ENCODE measurements at regions of chr14 and their contacts with region 1.

Region 1: DNA sequence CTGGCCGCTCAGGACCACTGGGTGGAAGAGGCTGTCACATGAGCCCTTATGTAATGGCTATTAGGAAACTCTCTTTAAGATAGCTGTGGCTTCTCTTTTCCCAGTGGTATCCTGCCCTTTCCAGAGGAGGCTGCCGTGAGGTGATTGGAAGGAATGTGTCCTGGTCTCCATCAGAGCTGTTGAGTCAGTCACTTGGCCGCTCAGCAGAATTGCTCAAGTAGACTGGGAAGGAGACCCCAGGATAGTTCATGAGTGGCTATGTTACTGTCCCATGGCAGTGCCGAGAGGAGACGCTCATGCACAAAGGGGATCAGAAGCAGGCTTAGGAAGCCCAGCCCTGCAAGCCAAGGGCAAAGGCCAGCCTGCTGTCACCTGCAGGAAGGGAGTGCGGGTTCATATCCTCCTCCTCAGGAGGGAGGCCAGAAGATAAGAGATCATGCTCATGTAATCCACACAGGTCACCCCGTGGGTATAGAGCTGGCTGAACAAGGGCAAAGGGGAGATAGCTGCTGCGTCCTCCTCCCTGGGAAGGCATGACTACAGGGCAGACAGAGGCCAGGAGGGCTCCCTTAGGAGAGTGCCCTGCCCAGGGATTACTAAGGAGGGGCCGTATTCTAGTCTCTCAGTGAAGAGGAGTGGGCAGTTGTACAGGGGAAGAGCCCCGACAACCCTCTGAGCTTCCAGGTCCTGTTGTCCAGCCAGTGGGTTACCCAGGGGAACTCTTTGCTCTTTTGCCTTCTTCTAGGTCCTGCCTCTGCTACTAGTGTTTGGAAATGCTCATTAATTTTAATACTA is 137.0 kb upstream of the MAX start:
- DNase-seq: peak; percentile 61
- ATAC-seq: peak; percentile 50
- H3K4me3 ChIP-seq: peak overlapping the region; percentile 6 to 65 (median 40); a peak in 5 of 6 replicates
- H3K27ac ChIP-seq: peak overlapping the region; percentile 66
- H3K4me1 ChIP-seq: peaks cover 75% of the 10 kb centered on the region
- H3K27me3 ChIP-seq: no peaks in the 10 kb centered on the region
- CTCF ChIP-seq: peak; percentile 26; the same call in 1 of the 2 replicates
- EP300 ChIP-seq: no peak
- POLR2A ChIP-seq: no peak; a peak in 1 of 4 replicates
- RAD21 ChIP-seq: no peak

Region 2: GRCh38 chr14:65131301-65131701 is 108.0 kb before region 1 on chr14:
- CTCF ChIA-PET with region 1: no interaction called
- POLR2A ChIA-PET with region 1: no interaction called
- in situ Hi-C with region 1: no loop called
- intact Hi-C with region 1: no loop called
- DNase-seq: no peak
- ATAC-seq: no peak
- H3K4me3 ChIP-seq: no peak overlapping the region
- H3K27ac ChIP-seq: no peak overlapping the region
- H3K4me1 ChIP-seq: peaks cover 29% of the 10 kb centered on the region
- H3K27me3 ChIP-seq: no peaks in the 10 kb centered on the region
- CTCF ChIP-seq: no peak
- EP300 ChIP-seq: no peak
- POLR2A ChIP-seq: no peak
- RAD21 ChIP-seq: no peak

Region 3: DNA sequence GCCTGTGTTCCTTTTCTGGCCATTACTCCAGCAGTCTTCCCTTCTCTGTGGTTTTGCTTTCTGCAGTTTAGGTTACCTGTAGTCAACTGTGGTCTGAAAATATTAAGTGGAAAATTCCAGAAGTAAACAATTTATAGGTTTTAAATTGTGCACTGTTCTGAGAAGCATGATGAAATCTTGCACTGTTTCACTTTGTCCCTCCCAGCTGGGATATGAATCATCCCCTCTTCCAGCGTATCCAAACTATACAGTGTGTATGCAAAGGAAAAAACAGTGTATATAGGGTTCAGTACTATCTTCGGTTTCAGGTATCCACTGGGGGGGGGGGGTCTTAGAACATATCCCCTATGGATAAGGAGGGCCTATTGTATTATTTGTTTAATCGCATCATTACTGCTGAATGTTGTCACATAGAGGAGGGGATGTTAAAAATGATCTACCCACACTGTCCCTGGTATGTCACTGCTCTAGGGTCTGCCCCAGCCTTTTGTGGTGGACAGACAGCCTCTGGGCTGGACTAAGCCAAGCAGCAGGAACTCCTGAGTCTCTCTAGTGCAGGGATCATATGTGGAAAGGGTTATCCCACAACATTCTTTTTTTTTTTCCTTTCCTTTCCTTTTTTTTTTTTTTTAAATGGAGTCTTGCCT is 27.9 kb before region 1 on chr14:
- CTCF ChIA-PET with region 1: no interaction called
- POLR2A ChIA-PET with region 1: no interaction called
- in situ Hi-C with region 1: no loop called
- intact Hi-C with region 1: no loop called
- DNase-seq: peak; percentile 37
- ATAC-seq: peak; percentile 49; the same call in 1 of the 3 replicates
- H3K4me3 ChIP-seq: no peak overlapping the region
- H3K27ac ChIP-seq: no peak overlapping the region
- H3K4me1 ChIP-seq: peaks cover 29% of the 10 kb centered on the region
- H3K27me3 ChIP-seq: no peaks in the 10 kb centered on the region; a peak in 1 of 5 replicates
- CTCF ChIP-seq: no peak
- EP300 ChIP-seq: peak in 1 of 2 experiments; percentile 39; a peak in 1 of 4 replicates
- POLR2A ChIP-seq: no peak
- RAD21 ChIP-seq: no peak

Region 4: GRCh38 chr14:65224799-65225198 is 14.5 kb before region 1 on chr14:
- CTCF ChIA-PET with region 1: interaction called, 3 read pairs
- POLR2A ChIA-PET with region 1: interaction called, 190 read pairs
- in situ Hi-C with region 1: no loop called
- intact Hi-C with region 1: loop called (anchors 1 kb)
- DNase-seq: no peak
- ATAC-seq: no peak
- H3K4me3 ChIP-seq: no peak overlapping the region
- H3K27ac ChIP-seq: no peak overlapping the region
- H3K4me1 ChIP-seq: peaks cover 65% of the 10 kb centered on the region
- H3K27me3 ChIP-seq: no peaks in the 10 kb centered on the region
- CTCF ChIP-seq: no peak
- EP300 ChIP-seq: no peak
- POLR2A ChIP-seq: no peak
- RAD21 ChIP-seq: no peak

Region 5: DNA sequence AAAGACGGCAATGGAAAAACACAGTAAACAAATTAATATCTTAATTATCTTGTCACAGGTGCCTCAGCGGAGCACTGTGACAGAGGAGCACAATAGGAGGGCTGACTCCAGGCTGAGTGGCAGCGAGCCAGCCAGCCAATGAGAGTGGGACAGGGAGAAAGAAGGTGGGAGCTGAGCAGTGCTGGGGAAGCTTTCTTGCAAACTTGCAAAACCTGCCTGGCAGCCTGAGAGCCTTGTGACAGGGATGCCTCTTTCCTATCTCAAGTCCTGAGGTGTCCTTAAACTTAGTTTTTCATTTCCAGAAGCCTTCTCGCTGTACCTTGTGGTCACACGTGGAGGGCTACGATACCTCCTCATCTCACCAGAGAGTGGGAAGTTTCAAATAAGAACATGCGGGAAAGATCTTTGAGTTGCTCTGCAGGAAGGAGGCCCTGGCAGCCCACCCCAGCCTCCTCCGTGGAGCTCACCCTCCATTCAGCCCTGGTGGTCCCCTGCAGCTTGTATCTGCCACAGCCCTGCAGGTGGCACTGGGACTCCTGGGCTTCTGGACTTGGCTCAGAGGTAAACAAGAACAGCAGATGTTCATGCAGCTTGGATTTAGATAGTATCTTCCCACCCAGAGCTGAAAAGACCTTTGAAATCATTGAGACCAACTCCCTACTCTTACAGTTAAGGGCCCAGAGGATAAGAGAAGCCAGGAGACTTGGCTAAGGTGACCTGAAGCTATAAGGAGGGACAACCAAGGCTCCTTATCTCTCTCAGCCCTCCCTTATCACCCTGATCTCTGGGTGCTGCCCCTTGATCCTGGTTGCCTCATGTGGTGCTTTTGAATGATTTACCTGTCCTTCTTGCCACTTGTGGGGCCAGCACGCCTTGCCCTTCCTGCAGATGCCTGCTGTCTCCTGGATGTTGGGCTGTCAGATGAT is 16.5 kb after region 1 on chr14:
- CTCF ChIA-PET with region 1: no interaction called
- POLR2A ChIA-PET with region 1: interaction called, 49 read pairs
- in situ Hi-C with region 1: no loop called
- intact Hi-C with region 1: no loop called
- DNase-seq: peak; percentile 69
- ATAC-seq: peak; percentile 82
- H3K4me3 ChIP-seq: peak overlapping the region; percentile 13 to 58 (median 20); a peak in 5 of 6 replicates
- H3K27ac ChIP-seq: peak overlapping the region; percentile 57
- H3K4me1 ChIP-seq: peaks cover 59% of the 10 kb centered on the region
- H3K27me3 ChIP-seq: no peaks in the 10 kb centered on the region
- CTCF ChIP-seq: peak; percentile 67
- EP300 ChIP-seq: 0 out of 4 replicates have a peak, but pooled peaks of 1 of the 2 experiments have one; percentile 2
- POLR2A ChIP-seq: no peak
- RAD21 ChIP-seq: no peak

Region 6: DNA sequence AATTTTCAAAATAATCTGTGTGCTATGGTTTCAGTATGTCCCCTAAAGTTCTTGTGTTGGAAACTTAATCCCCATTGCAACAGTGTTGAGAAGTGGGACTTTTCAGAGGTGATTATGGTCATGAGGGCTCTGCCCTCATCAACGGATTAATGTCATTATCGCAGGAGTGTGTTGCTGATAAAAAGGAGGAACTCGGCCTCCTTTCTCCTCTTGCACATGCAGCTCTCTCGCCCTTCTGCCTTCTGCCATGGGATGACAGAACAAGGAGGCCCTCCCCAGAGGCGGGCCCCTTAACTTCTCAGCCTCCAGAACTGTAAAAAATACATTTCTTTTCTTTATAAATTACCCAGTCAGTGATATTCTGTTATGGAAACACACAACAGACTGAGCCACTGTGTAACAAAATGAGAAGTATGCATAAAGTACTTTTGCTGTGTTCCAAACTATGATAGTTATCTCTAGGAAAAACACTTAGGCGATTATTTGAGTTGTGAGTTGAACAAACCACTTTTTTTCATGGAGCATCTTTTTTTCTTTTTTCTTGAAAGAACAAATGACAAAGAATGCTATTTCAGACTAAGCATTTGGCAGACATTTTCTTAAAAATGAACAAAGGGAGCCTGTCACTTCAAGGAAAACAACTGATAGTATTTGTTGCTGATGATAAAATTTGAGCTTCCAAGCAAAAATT is 38.4 kb after region 1 on chr14:
- CTCF ChIA-PET with region 1: no interaction called
- POLR2A ChIA-PET with region 1: interaction called, 12 read pairs
- in situ Hi-C with region 1: no loop called
- intact Hi-C with region 1: no loop called
- DNase-seq: no peak
- ATAC-seq: no peak
- H3K4me3 ChIP-seq: no peak overlapping the region
- H3K27ac ChIP-seq: no peak overlapping the region
- H3K4me1 ChIP-seq: peaks cover 23% of the 10 kb centered on the region
- H3K27me3 ChIP-seq: no peaks in the 10 kb centered on the region; a peak in 1 of 5 replicates
- CTCF ChIP-seq: no peak
- EP300 ChIP-seq: no peak
- POLR2A ChIP-seq: no peak
- RAD21 ChIP-seq: no peak

Measured in HepG2 (cell line).